Left lung (tissue), 14 donors: ENCODE measurements at regions of chr4 and their contacts with region 1.

Region 1: GRCh38 chr4:125314676-125315575 is at the start of gene FAT4:
- DNase-seq: peak; percentile 94 to 98 (median 96)
- ATAC-seq: peak; percentile 91
- H3K4me3 ChIP-seq: peak within 1 kb of the TSS; percentile 67 to 75
- H3K27ac ChIP-seq: peak within 1 kb of the TSS; percentile 84 to 94
- H3K4me1 ChIP-seq: peaks cover 5 to 21% of the 10 kb centered on the region in 2 donors
- H3K27me3 ChIP-seq: peaks cover 0 to 61% of the 10 kb centered on the region in 2 donors
- CTCF ChIP-seq: no peak
- polyA plus RNA-seq, gene FAT4: 51.7 to 78.5 (median 69.3) TPM

Region 2: DNA sequence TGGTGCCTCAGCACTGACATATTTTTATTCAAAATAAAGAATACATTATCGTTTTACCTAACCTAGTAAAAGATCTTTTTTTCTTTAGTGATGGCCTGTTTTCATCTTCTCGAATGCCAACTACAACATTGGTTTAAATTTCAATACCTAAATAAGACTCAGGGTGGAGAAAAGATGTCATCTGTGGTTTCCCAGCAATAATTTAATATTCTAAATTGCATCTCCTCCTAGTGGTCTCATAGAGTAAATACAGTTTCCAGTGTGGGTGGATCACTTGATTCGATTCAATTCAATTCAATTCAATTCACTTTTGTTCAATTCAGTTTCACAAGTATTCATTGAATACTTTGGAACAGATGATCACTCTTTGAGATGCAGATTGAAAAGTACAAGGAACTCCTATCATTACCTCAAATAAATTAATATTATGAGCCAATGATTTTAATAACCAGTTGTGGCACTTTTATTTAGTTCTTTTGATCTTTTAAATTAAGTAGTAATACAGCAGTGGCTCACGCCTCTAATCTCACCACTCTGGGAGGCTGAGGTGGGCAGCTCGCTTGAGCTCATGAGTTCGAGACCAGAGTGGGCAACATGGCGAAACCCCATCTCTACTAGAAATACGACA is 427.0 kb after region 1 on chr4:
- intact Hi-C with region 1: loop called in 1 of 2 experiments (anchors 10 kb)
- DNase-seq: no peak
- ATAC-seq: peak; percentile 80
- H3K4me3 ChIP-seq: no peak overlapping the region
- H3K27ac ChIP-seq: no peak overlapping the region
- H3K4me1 ChIP-seq: peaks cover 3 to 6% of the 10 kb centered on the region in 2 donors
- H3K27me3 ChIP-seq: no peaks in the 10 kb centered on the region
- CTCF ChIP-seq: peak; percentile 51